ENCODE measurements at regions of chr16 and their contacts with region 1.

Region 1: GRCh38 chr16:30844671-30845449 is 49.0 kb downstream of the BCL7C start:
- DNase-seq: peak; percentile 81
- H3K4me3 ChIP-seq: no peak overlapping the region
- H3K27ac ChIP-seq: peak overlapping the region; percentile 21
- H3K27me3 ChIP-seq: no peaks in the 10 kb centered on the region
- CTCF ChIP-seq: peak; percentile 95

Region 2: DNA sequence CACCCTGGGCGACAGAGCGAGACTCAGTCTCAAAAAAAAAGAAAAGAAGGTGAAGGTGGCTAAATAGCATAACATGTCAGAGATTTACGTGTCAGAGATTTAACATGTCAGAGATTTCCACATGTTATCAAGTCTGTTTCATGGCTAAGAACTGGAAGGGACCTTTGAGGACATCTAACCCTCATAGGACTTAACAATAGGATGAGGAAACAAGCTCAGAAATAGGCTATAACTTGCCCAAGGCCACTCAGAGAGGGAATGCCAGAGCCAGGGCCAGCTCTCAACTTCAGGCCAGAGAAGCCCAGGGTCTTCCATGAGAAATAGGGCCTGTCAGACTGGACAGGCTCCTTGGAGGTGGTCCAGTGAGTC is 31.1 kb before region 1 on chr16:
- CTCF ChIA-PET with region 1: interaction called, 33 read pairs
- POLR2A ChIA-PET with region 1: no interaction called
- DNase-seq: no peak
- H3K4me3 ChIP-seq: peak overlapping the region; percentile 53
- H3K27ac ChIP-seq: peak overlapping the region; percentile 11
- H3K27me3 ChIP-seq: no peaks in the 10 kb centered on the region
- CTCF ChIP-seq: no peak

Region 3: DNA sequence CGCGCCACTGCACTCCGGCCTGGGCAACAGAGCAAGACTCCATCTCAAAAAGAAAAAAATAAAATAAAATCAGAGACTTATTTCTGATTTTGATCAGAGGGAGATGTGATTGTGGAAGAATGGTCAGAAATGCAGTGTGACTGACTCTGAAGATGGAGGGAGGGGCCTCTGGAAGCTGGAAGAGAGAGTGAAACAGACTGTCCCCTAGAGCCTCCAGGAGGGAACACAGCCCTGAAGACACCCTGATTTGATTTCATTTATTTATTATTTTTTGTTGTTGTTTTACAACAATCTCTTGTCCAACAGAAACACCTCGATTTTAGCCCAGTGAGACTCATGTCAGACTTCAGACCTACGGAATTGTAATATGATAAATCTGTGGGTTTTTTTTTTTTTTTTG is 22.9 kb after region 1 on chr16:
- CTCF ChIA-PET with region 1: interaction called, 11 read pairs
- POLR2A ChIA-PET with region 1: no interaction called
- DNase-seq: no peak
- H3K4me3 ChIP-seq: no peak overlapping the region
- H3K27ac ChIP-seq: no peak overlapping the region
- H3K27me3 ChIP-seq: no peaks in the 10 kb centered on the region
- CTCF ChIP-seq: 0 out of 2 replicates have a peak, but pooled peaks have one; percentile 18

Region 4: GRCh38 chr16:30920891-30921290 is 76.0 kb after region 1 on chr16:
- CTCF ChIA-PET with region 1: interaction called, 21 read pairs
- POLR2A ChIA-PET with region 1: interaction called, 3 read pairs
- DNase-seq: no peak
- H3K4me3 ChIP-seq: no peak overlapping the region
- H3K27ac ChIP-seq: no peak overlapping the region
- H3K27me3 ChIP-seq: no peaks in the 10 kb centered on the region
- CTCF ChIP-seq: no peak

Region 5: DNA sequence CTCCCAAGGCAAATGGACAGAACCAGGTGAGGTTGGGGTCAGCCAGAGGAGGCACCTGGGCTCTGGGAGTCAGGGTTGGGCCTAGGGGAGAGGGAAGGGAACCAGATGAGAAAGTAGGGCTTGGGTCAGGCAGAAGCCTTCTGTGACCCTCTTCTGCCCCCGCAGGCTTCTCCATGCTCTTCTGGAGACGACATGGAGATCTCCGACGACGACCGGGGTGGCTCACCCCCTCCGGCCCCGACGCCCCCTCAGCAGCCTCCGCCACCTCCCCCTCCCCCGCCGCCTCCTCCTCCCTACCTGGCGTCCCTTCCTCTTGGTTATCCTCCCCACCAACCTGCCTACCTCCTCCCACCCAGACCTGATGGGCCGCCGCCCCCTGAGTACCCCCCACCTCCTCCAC is 120.6 kb after region 1 on chr16:
- CTCF ChIA-PET with region 1: interaction called, 10 read pairs
- POLR2A ChIA-PET with region 1: no interaction called
- DNase-seq: no peak
- H3K4me3 ChIP-seq: no peak overlapping the region
- H3K27ac ChIP-seq: no peak overlapping the region
- H3K27me3 ChIP-seq: no peaks in the 10 kb centered on the region
- CTCF ChIP-seq: no peak